WTC11 (cell line): ENCODE measurements at regions of chr7 and their contacts with region 1.

Region 1: GRCh38 chr7:4450475-4450874 is 231.6 kb upstream of the FOXK1 start:
- DNase-seq: no peak
- ATAC-seq: no peak
- H3K4me3 Mint-ChIP-seq: no peak overlapping the region
- H3K27ac Mint-ChIP-seq: no peak overlapping the region
- H3K4me1 Mint-ChIP-seq: no peaks in the 10 kb centered on the region
- H3K27me3 Mint-ChIP-seq: peaks cover 3% of the 10 kb centered on the region; the same call in 1 of the 2 replicates
- CTCF ChIP-seq: no peak

Region 2: GRCh38 chr7:4428526-4428925 is 21.9 kb before region 1 on chr7:
- CTCF ChIA-PET with region 1: no interaction called
- POLR2A ChIA-PET with region 1: interaction called, 13 read pairs
- DNase-seq: no peak
- ATAC-seq: no peak
- H3K4me3 Mint-ChIP-seq: no peak overlapping the region
- H3K27ac Mint-ChIP-seq: no peak overlapping the region
- H3K4me1 Mint-ChIP-seq: no peaks in the 10 kb centered on the region
- H3K27me3 Mint-ChIP-seq: peaks cover 4% of the 10 kb centered on the region
- CTCF ChIP-seq: no peak